ENCODE measurements at regions of chr11 and their contacts with region 1.

Region 1: DNA sequence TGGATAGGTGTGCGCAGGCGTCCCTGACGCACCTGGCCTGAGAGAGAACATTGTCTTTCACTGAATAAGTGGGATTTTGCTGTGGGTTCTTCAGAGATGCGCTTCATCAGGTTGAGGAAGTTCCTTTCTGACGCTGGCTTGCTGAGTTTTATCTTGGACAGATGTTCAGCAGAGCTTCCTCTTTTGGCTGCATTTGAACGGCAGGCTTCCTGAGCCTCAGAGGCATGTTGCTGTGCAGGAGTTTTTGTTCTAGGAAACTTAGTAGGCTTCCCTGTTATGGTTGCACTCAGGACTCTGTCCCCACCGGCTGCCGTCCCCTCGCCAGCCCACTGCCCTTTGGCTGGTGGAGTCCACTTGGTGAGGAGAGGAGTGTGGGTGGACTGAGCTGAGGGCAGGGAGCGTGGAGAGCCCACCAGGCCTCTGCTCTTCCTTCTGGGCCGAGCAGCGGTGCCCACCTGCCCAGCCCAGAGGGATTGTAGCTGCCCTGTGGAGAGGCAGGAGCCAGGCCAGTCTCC is 17.2 kb downstream of the FRMD8 start:
- DNase-seq: peak; percentile 91
- ATAC-seq: peak; percentile 68
- H3K4me3 ChIP-seq: peak overlapping the region in 2 of 5 experiments; percentile 10 to 22
- H3K4me3 Mint-ChIP-seq: peak overlapping the region; percentile 71
- H3K27ac ChIP-seq: peak overlapping the region; percentile 81 to 86
- H3K27ac Mint-ChIP-seq: peak overlapping the region; percentile 96
- H3K4me1 ChIP-seq: peaks cover 34 to 57% of the 10 kb centered on the region in 2 donors
- H3K4me1 Mint-ChIP-seq: peaks cover 40% of the 10 kb centered on the region
- H3K27me3 ChIP-seq: no peaks in the 10 kb centered on the region
- H3K27me3 Mint-ChIP-seq: no peaks in the 10 kb centered on the region
- CTCF ChIP-seq: no peak

Region 2: DNA sequence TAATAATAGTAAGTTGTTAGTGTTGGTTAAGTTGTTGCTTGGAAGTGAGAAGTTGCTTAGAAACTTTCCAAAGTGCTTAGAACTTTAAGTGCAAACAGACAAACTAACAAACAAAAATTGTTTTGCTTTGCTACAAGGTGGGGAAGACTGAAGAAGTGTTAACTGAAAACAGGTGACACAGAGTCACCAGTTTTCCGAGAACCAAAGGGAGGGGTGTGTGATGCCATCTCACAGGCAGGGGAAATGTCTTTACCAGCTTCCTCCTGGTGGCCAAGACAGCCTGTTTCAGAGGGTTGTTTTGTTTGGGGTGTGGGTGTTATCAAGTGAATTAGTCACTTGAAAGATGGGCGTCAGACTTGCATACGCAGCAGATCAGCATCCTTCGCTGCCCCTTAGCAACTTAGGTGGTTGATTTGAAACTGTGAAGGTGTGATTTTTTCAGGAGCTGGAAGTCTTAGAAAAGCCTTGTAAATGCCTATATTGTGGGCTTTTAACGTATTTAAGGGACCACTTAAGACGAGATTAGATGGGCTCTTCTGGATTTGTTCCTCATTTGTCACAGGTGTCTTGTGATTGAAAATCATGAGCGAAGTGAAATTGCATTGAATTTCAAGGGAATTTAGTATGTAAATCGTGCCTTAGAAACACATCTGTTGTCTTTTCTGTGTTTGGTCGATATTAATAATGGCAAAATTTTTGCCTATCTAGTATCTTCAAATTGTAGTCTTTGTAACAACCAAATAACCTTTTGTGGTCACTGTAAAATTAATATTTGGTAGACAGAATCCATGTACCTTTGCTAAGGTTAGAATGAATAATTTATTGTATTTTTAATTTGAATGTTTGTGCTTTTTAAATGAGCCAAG is 21.7 kb after region 1 on chr11:
- CTCF ChIA-PET with region 1: interaction called, 5 read pairs
- POLR2A ChIA-PET with region 1: interaction called, 11 read pairs
- intact Hi-C with region 1: no loop called
- DNase-seq: peak; percentile 94
- ATAC-seq: peak; percentile 36
- H3K4me3 ChIP-seq: peak overlapping the region; percentile 63 to 98 (median 75)
- H3K4me3 Mint-ChIP-seq: peak overlapping the region; percentile 92
- H3K27ac ChIP-seq: peak overlapping the region; percentile 91 to 97
- H3K27ac Mint-ChIP-seq: peak overlapping the region; percentile 100
- H3K4me1 ChIP-seq: peaks cover 79 to 88% of the 10 kb centered on the region in 2 donors
- H3K4me1 Mint-ChIP-seq: peaks cover 75% of the 10 kb centered on the region
- H3K27me3 ChIP-seq: no peaks in the 10 kb centered on the region
- H3K27me3 Mint-ChIP-seq: no peaks in the 10 kb centered on the region
- CTCF ChIP-seq: peak; percentile 37